B cell (primary cell): ENCODE measurements at regions of chr12 and their contacts with region 1.

Region 1: GRCh38 chr12:104381731-104382480 is 74.8 kb upstream of the CHST11 start:
- DNase-seq: peak; percentile 90
- ATAC-seq: peak; percentile 90
- H3K4me3 ChIP-seq: no peak overlapping the region
- H3K4me3 Mint-ChIP-seq: no peak overlapping the region
- H3K27ac ChIP-seq: no peak overlapping the region
- H3K27ac Mint-ChIP-seq: peak overlapping the region; percentile 1
- H3K4me1 ChIP-seq: peaks cover 3 to 9% of the 10 kb centered on the region in 2 donors
- H3K4me1 Mint-ChIP-seq: peaks cover 9% of the 10 kb centered on the region
- H3K27me3 ChIP-seq: peaks cover 0 to 4% (median 2%) of the 10 kb centered on the region in 4 experiments
- H3K27me3 Mint-ChIP-seq: peaks cover 6% of the 10 kb centered on the region
- CTCF ChIP-seq: peak; percentile 95

Region 2: GRCh38 chr12:104456417-104456949 is 74.6 kb after region 1 on chr12 and contains the start of gene CHST11:
- CTCF ChIA-PET with region 1: interaction called, 19 read pairs
- POLR2A ChIA-PET with region 1: interaction called, 4 read pairs
- intact Hi-C with region 1: loop called (anchors 5 kb)
- DNase-seq: peak; percentile 84
- ATAC-seq: peak; percentile 75
- H3K4me3 ChIP-seq: peak within 1 kb of the TSS; percentile 76 to 99 (median 97)
- H3K4me3 Mint-ChIP-seq: peak within 1 kb of the TSS; percentile 98
- H3K27ac ChIP-seq: peak within 1 kb of the TSS; percentile 71 to 92
- H3K27ac Mint-ChIP-seq: peak within 1 kb of the TSS; percentile 94
- H3K4me1 ChIP-seq: peaks cover 28 to 36% of the 10 kb centered on the region in 2 donors
- H3K4me1 Mint-ChIP-seq: peaks cover 47% of the 10 kb centered on the region
- H3K27me3 ChIP-seq: no peaks in the 10 kb centered on the region
- H3K27me3 Mint-ChIP-seq: no peaks in the 10 kb centered on the region
- CTCF ChIP-seq: peak; percentile 28
- total RNA-seq, gene CHST11: 135 and 152 TPM in 2 replicates

Region 3: GRCh38 chr12:104604070-104604994 is 222.4 kb after region 1 on chr12:
- CTCF ChIA-PET with region 1: interaction called, 12 read pairs
- POLR2A ChIA-PET with region 1: no interaction called
- intact Hi-C with region 1: no loop called
- DNase-seq: peak; percentile 82
- ATAC-seq: peak; percentile 89
- H3K4me3 ChIP-seq: peak overlapping the region in 1 of 5 experiments; percentile 21
- H3K4me3 Mint-ChIP-seq: peak overlapping the region; percentile 58
- H3K27ac ChIP-seq: peak overlapping the region; percentile 60 to 73
- H3K27ac Mint-ChIP-seq: peak overlapping the region; percentile 69
- H3K4me1 ChIP-seq: peaks cover 37 to 44% of the 10 kb centered on the region in 2 donors
- H3K4me1 Mint-ChIP-seq: peaks cover 64% of the 10 kb centered on the region
- H3K27me3 ChIP-seq: no peaks in the 10 kb centered on the region
- H3K27me3 Mint-ChIP-seq: no peaks in the 10 kb centered on the region
- CTCF ChIP-seq: no peak

Region 4: GRCh38 chr12:104680066-104680465 is 298.2 kb after region 1 on chr12:
- CTCF ChIA-PET with region 1: interaction called, 12 read pairs
- POLR2A ChIA-PET with region 1: no interaction called
- intact Hi-C with region 1: no loop called
- DNase-seq: peak; percentile 57
- ATAC-seq: peak; percentile 64
- H3K4me3 ChIP-seq: no peak overlapping the region
- H3K4me3 Mint-ChIP-seq: no peak overlapping the region
- H3K27ac ChIP-seq: peak overlapping the region in 1 of 2 donors; percentile 4
- H3K27ac Mint-ChIP-seq: peak overlapping the region; percentile 79
- H3K4me1 ChIP-seq: peaks cover 46 to 55% of the 10 kb centered on the region in 2 donors
- H3K4me1 Mint-ChIP-seq: peaks cover 79% of the 10 kb centered on the region
- H3K27me3 ChIP-seq: no peaks in the 10 kb centered on the region
- H3K27me3 Mint-ChIP-seq: no peaks in the 10 kb centered on the region
- CTCF ChIP-seq: peak; percentile 15

Region 5: DNA sequence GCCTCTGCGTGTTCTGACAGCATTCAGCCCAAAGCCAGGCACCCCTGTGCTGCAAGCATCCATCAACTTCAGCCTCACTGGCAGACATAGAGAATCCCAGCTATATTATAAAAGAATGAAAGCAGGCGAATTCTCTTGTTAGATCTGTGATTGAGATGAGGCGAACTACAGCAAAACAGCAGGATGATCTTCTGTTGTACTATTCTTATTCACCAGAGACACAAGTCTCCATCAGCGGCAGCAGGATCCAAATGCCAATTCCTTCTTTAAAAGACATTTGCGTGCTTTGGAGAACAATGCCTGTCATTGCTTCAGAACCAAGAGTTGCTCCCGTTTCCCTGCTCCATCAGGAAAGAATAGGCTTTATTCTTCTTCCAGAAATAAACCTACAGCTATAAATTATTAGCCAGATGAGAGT is 387.2 kb after region 1 on chr12:
- CTCF ChIA-PET with region 1: interaction called, 19 read pairs
- POLR2A ChIA-PET with region 1: no interaction called
- intact Hi-C with region 1: no loop called
- DNase-seq: no peak
- ATAC-seq: no peak
- H3K4me3 ChIP-seq: no peak overlapping the region
- H3K4me3 Mint-ChIP-seq: no peak overlapping the region
- H3K27ac ChIP-seq: no peak overlapping the region
- H3K27ac Mint-ChIP-seq: no peak overlapping the region
- H3K4me1 ChIP-seq: peaks cover 18% of the 10 kb centered on the region in 2 donors
- H3K4me1 Mint-ChIP-seq: peaks cover 17% of the 10 kb centered on the region
- H3K27me3 ChIP-seq: peaks cover 0 to 23% (median 16%) of the 10 kb centered on the region in 4 experiments
- H3K27me3 Mint-ChIP-seq: peaks cover 36% of the 10 kb centered on the region
- CTCF ChIP-seq: no peak

Region 6: DNA sequence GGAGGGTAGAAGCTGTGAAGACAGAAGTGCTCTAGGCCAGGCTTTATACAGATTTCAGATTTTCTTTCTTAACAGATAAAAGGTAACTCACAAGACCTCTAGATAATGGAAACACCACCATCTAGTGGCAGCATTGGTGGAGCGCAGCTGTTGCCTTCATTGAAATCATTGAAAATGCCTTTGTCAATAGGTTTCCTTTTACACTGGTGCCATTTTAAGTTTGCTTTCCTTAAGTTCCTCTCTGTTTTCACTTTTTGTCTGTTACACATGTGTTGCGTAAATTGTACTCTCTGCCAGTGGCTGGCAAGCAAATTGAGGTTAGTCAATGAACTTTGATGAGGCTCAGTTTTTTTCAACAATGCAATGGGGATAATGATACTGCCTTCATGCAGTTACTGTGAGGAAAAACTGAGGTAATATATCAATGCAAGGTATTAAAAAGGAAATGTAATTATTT is 671.2 kb after region 1 on chr12:
- CTCF ChIA-PET with region 1: interaction called, 147 read pairs
- POLR2A ChIA-PET with region 1: no interaction called
- intact Hi-C with region 1: loop called (anchors 1 kb)
- DNase-seq: peak; percentile 84
- ATAC-seq: peak; percentile 95
- H3K4me3 ChIP-seq: no peak overlapping the region
- H3K4me3 Mint-ChIP-seq: no peak overlapping the region
- H3K27ac ChIP-seq: no peak overlapping the region
- H3K27ac Mint-ChIP-seq: peak overlapping the region; percentile 4
- H3K4me1 ChIP-seq: peaks cover 0 to 11% of the 10 kb centered on the region in 2 donors
- H3K4me1 Mint-ChIP-seq: peaks cover 18% of the 10 kb centered on the region
- H3K27me3 ChIP-seq: no peaks in the 10 kb centered on the region
- H3K27me3 Mint-ChIP-seq: no peaks in the 10 kb centered on the region
- CTCF ChIP-seq: peak; percentile 96